Right ventricle myocardium inferior (tissue), 1 donor: ENCODE measurements at regions of chr14 and their contacts with region 1.

Region 1: GRCh38 chr14:22386924-22387775 is 201.9 kb downstream of the DAD1 start:
- DNase-seq: peak; percentile 67
- ATAC-seq: peak; percentile 35

Region 2: DNA sequence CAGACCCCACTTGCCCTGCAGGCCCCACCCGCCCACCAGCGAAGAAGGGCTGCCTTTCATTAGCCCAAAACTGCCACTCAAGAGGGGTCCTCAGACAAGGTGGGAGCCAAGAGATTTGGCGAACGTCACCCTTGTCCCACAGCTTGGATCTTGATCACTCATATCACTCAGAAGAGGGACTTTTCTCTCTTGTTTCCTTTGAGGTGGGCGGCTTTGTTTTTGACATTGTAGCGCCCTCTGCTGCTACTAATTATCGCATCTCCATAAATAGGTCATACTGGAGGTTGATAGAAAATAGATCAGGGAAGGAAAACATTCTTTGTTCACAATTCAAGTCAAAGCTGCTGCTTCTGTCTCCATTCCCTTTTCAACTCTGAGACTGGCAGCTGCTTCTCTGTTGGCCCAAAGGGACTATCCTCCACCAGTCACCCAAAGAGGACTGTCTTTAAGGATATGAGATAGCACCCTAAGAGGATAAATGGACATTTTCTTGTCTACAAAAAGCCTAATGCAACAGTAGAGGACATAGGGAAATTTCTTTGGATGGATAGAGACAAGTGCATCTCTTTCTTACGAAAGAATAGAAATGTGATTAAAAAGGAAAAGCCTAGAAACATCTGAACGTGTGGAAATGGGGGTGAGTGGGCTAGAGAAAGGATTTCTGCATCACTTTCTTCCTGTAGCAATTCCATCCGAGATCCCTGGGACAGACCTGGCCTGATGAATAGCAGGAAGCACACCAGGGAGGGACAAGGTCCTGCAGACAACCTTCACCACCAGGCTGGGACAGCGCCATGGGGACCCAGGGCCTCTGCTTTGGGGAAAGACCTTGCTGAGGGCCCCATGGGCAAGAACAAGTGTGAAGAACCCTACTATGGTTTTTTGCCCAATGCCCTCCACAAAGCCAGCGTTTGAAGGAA is 86.0 kb after region 1 on chr14:
- intact Hi-C with region 1: loop called (anchors 2 kb)
- DNase-seq: no peak
- ATAC-seq: no peak

Region 3: DNA sequence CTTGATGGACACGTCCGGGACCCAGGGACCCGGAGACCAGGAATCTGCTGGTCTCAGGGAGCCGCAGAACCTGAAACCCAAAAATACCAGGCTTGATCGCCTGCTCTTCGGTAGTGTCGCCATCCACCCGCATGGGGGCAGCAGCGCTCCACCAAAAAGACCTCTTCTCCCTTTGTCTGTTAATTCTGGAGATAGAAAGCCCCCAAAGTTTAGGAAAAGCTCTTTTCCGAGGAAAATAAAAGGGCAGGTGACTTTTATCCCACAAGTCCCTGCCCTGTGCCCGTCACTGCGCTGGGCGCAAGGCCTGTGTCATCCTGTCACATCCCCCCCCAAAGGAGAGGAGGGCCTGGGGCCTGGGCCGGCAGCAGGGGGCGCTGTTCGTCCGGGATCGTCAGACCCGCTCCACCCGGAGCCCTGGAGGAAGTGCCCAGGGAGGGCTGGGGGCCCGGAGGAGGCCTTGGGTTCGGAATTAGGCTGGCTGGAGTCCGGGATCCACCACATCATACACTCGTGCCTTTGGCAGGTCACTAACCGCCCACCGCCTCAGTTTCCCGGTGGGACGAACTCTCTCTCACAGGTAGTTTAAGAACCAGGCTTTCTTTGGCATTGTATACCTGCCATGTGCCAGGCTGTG is 170.0 kb after region 1 on chr14:
- intact Hi-C with region 1: loop called (anchors 5 kb)
- DNase-seq: peak; percentile 84
- ATAC-seq: peak; percentile 88

Region 4: DNA sequence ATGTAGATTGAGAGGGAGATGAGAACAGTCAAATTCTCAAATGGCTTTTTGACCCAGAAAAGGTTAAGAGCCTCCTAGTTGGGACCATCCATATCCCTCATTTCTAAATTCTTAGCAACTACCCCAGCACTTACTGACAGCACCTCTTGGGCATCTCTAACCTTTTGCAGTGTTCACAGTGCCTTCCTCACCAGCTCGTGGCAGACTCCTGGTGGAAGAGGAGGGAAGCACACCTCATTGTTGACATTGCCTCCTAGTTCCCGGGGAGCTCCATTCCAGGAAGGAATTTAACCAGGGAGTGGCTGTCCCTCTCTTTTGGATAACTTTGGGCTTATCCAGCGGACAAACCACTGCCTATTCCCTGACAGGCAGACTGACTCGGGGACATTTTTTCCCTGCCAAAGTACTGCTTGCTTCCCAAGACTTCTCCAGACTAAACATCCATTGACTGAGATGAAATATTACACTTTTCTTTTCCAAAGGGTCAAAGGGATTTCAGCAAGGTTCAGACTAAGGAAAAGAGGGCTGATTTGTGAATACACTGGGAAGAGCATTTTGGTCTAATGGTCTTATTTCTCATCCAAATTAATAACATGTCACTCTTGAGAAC is 266.0 kb after region 1 on chr14:
- intact Hi-C with region 1: loop called (anchors 2 kb)
- DNase-seq: no peak
- ATAC-seq: peak; percentile 53

Region 5: GRCh38 chr14:22829661-22830442 is 442.7 kb after region 1 on chr14 and contains the start of gene MRPL52:
- intact Hi-C with region 1: loop called (anchors 10 kb)
- DNase-seq: peak; percentile 94
- ATAC-seq: peak; percentile 95
- total RNA-seq, gene MRPL52: 110 TPM